ENCODE measurements at regions of chr21 and their contacts with region 1.

Region 1: DNA sequence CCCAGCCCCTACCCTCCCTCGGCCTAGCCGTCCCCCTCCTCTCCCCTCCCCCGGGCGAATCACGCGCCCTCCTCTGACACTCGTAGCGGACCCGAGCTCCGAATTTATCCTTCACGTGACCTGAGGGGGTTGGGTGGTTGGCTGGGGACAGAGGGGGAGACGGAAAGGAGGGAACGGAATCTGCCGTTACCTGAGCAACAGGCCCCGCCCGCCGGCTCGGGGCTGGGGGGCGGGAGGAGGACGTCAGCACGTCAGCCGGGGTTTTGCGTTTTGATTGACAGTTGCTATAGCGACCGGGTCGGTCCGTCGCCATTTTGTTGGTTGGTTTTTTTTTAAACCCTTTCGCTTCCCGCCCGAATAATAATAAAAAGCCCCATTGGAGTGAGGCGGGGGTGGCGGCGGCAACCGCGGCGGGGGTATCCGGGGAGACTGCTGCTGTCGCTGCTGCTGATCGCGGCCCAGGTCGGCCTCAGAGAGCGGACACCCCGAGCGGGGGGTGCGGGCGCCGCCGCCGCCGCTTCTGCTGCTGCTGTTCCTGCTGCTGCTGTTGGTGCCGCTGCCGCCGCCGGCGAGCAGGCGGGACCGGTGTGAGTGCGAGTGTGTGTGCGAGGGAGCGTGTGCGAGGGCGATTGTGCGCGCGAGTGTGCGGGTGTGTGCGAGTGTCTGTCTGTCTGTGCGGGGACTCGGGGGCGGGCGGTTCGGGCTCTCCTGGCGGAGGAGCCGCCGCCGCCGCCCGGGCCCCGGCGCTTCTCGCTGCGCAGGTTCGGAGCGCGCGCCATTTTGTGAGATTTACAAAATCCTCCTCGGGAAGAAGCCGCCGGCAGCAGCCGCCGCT is at the start of gene DYRK1A:
- DNase-seq: peak; percentile 100
- ATAC-seq: peak; percentile 80
- H3K4me3 ChIP-seq: peak within 1 kb of the TSS; percentile 71 to 94 (median 87)
- H3K4me3 Mint-ChIP-seq: peak within 1 kb of the TSS; percentile 99
- H3K27ac ChIP-seq: peak within 1 kb of the TSS; percentile 93 to 98
- H3K27ac Mint-ChIP-seq: peak within 1 kb of the TSS; percentile 100
- H3K4me1 ChIP-seq: peaks cover 39 to 41% of the 10 kb centered on the region in 2 donors
- H3K4me1 Mint-ChIP-seq: peaks cover 48% of the 10 kb centered on the region
- H3K27me3 ChIP-seq: no peaks in the 10 kb centered on the region
- H3K27me3 Mint-ChIP-seq: no peaks in the 10 kb centered on the region
- CTCF ChIP-seq: no peak
- total RNA-seq, gene DYRK1A: 147 and 155 TPM in 2 replicates

Region 2: GRCh38 chr21:36297921-36298594 is 1068.6 kb before region 1 on chr21:
- CTCF ChIA-PET with region 1: no interaction called
- POLR2A ChIA-PET with region 1: no interaction called
- intact Hi-C with region 1: loop called (anchors 5 kb)
- DNase-seq: peak; percentile 92
- ATAC-seq: peak; percentile 88
- H3K4me3 ChIP-seq: peak overlapping the region in 4 of 5 experiments; percentile 5 to 53 (median 29)
- H3K4me3 Mint-ChIP-seq: peak overlapping the region; percentile 80
- H3K27ac ChIP-seq: peak overlapping the region; percentile 94 to 97
- H3K27ac Mint-ChIP-seq: peak overlapping the region; percentile 97
- H3K4me1 ChIP-seq: peaks cover 52 to 71% of the 10 kb centered on the region in 2 donors
- H3K4me1 Mint-ChIP-seq: peaks cover 53% of the 10 kb centered on the region
- H3K27me3 ChIP-seq: no peaks in the 10 kb centered on the region
- H3K27me3 Mint-ChIP-seq: no peaks in the 10 kb centered on the region
- CTCF ChIP-seq: no peak

Region 3: GRCh38 chr21:37072988-37073416 is 293.7 kb before region 1 on chr21 and contains the starts of genes PIGP and TTC3:
- CTCF ChIA-PET with region 1: no interaction called
- POLR2A ChIA-PET with region 1: no interaction called
- intact Hi-C with region 1: loop called (anchors 2 kb)
- DNase-seq: peak; percentile 98
- ATAC-seq: peak; percentile 67
- H3K4me3 ChIP-seq: peak within 1 kb of the TSS; percentile 80 to 92 (median 86)
- H3K4me3 Mint-ChIP-seq: peak within 1 kb of the TSS; percentile 98
- H3K27ac ChIP-seq: peak within 1 kb of the TSS; percentile 98
- H3K27ac Mint-ChIP-seq: peak within 1 kb of the TSS; percentile 99
- H3K4me1 ChIP-seq: peaks cover 22 to 23% of the 10 kb centered on the region in 2 donors
- H3K4me1 Mint-ChIP-seq: peaks cover 46% of the 10 kb centered on the region
- H3K27me3 ChIP-seq: no peaks in the 10 kb centered on the region
- H3K27me3 Mint-ChIP-seq: no peaks in the 10 kb centered on the region
- CTCF ChIP-seq: no peak
- total RNA-seq, gene PIGP: 21.7 and 22.7 TPM in 2 replicates
- total RNA-seq, gene TTC3: 163 and 191 TPM in 2 replicates

Region 4: DNA sequence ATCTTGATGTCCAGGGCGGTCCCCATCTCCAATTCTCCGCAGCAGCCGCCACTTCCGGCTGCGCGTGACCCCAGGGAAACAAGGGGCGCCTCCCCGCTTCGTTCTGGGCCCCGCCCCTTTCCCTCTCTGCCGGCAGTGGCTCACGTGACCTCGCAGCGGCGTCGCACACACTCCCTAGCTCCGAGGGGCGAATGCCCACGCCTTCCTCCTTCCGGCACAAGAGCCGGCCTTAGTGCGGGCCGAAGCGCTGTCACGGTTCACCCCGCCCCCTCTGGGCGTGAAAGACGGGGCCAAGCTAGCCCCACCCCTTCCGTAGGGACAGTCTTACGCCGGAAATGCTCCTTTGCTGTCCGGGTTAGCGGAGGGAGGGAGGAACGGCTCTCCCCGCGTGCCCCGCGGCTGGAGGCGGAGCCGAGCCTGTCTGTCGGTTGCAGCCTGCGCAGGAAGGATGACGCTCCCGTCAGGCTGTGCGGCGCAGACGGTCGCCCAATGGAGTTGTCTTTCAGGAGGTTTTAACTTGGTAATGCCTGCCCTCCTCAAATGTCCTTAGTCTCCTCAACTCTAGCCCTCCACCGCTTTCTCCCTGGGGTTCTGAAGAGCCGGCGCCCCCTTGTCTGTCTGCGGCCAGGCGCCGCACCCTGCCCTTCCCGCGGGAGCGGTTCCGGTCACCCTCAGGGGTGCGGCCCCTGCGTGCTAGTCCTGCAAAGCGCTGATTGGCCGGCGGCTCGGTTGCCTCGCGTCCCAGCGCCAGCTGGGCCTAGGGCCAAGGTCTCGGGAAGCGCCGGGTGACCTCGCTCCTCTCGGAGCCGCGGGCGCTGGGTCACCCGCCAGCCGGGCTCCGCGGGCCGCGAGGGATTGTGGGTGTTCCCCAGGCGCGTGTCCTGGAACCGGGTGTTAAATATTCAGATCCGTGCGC is 99.2 kb before region 1 on chr21 and contains the start of gene VPS26C:
- CTCF ChIA-PET with region 1: interaction called, 5 read pairs
- POLR2A ChIA-PET with region 1: interaction called, 25 read pairs
- intact Hi-C with region 1: loop called (anchors 1 kb)
- DNase-seq: peak; percentile 100
- ATAC-seq: peak; percentile 86
- H3K4me3 ChIP-seq: peak within 1 kb of the TSS; percentile 66 to 99 (median 99)
- H3K4me3 Mint-ChIP-seq: peak within 1 kb of the TSS; percentile 96
- H3K27ac ChIP-seq: peak within 1 kb of the TSS; percentile 99
- H3K27ac Mint-ChIP-seq: peak within 1 kb of the TSS; percentile 99
- H3K4me1 ChIP-seq: peaks cover 14% of the 10 kb centered on the region in 2 donors
- H3K4me1 Mint-ChIP-seq: peaks cover 35% of the 10 kb centered on the region
- H3K27me3 ChIP-seq: peaks cover 0 to 3% (median 0%) of the 10 kb centered on the region in 4 experiments
- H3K27me3 Mint-ChIP-seq: no peaks in the 10 kb centered on the region
- CTCF ChIP-seq: no peak
- total RNA-seq, gene VPS26C: 58.6 and 59.6 TPM in 2 replicates

Region 5: DNA sequence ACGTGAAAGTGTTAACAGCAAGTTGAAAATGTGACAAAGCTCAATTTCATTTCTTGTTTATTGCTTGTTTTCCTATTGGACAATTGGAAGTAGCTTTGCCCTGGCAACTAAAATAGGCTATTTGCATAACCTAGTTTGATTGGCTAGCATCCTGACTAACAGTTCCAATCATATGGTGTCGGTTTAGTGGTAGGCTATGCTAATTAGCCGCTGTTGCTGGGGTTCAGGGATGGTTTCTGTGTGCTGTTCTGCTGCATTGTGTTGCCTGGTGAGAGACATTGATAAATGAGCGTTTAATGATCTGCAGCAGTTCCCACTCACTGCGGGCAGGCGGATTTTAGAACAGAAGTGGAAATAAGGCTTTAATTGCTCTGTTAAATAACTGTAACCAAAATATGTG is 68.4 kb after region 1 on chr21:
- CTCF ChIA-PET with region 1: interaction called, 3 read pairs
- POLR2A ChIA-PET with region 1: no interaction called
- intact Hi-C with region 1: loop called (anchors 1 kb)
- DNase-seq: peak; percentile 79
- ATAC-seq: peak; percentile 93
- H3K4me3 ChIP-seq: no peak overlapping the region
- H3K4me3 Mint-ChIP-seq: no peak overlapping the region
- H3K27ac ChIP-seq: no peak overlapping the region
- H3K27ac Mint-ChIP-seq: no peak overlapping the region
- H3K4me1 ChIP-seq: peaks cover 24 to 39% of the 10 kb centered on the region in 2 donors
- H3K4me1 Mint-ChIP-seq: peaks cover 36% of the 10 kb centered on the region
- H3K27me3 ChIP-seq: no peaks in the 10 kb centered on the region
- H3K27me3 Mint-ChIP-seq: no peaks in the 10 kb centered on the region
- CTCF ChIP-seq: no peak

Measured in B cell (primary cell).